ENCODE measurements at regions of chr13 and their contacts with region 1.

Region 1: GRCh38 chr13:113758651-113759524 is at the start of gene TMEM255B:
- DNase-seq: peak; percentile 78
- ATAC-seq: peak; percentile 85
- H3K4me3 Mint-ChIP-seq: peak within 1 kb of the TSS; percentile 82
- H3K27ac Mint-ChIP-seq: peak within 1 kb of the TSS; percentile 80
- H3K4me1 Mint-ChIP-seq: peaks cover 19% of the 10 kb centered on the region
- H3K27me3 Mint-ChIP-seq: peaks cover 28% of the 10 kb centered on the region
- CTCF ChIP-seq: no peak
- total RNA-seq, gene TMEM255B: 5.2 and 6.2 TPM in 2 replicates

Region 2: GRCh38 chr13:113732176-113732960 is 26.5 kb before region 1 on chr13:
- CTCF ChIA-PET with region 1: no interaction called
- POLR2A ChIA-PET with region 1: no interaction called
- intact Hi-C with region 1: loop called (anchors 2 kb)
- DNase-seq: no peak
- ATAC-seq: peak; percentile 87
- H3K4me3 Mint-ChIP-seq: peak overlapping the region; percentile 32
- H3K27ac Mint-ChIP-seq: no peak overlapping the region
- H3K4me1 Mint-ChIP-seq: peaks cover 9% of the 10 kb centered on the region
- H3K27me3 Mint-ChIP-seq: peaks cover 2% of the 10 kb centered on the region
- CTCF ChIP-seq: no peak

Region 3: DNA sequence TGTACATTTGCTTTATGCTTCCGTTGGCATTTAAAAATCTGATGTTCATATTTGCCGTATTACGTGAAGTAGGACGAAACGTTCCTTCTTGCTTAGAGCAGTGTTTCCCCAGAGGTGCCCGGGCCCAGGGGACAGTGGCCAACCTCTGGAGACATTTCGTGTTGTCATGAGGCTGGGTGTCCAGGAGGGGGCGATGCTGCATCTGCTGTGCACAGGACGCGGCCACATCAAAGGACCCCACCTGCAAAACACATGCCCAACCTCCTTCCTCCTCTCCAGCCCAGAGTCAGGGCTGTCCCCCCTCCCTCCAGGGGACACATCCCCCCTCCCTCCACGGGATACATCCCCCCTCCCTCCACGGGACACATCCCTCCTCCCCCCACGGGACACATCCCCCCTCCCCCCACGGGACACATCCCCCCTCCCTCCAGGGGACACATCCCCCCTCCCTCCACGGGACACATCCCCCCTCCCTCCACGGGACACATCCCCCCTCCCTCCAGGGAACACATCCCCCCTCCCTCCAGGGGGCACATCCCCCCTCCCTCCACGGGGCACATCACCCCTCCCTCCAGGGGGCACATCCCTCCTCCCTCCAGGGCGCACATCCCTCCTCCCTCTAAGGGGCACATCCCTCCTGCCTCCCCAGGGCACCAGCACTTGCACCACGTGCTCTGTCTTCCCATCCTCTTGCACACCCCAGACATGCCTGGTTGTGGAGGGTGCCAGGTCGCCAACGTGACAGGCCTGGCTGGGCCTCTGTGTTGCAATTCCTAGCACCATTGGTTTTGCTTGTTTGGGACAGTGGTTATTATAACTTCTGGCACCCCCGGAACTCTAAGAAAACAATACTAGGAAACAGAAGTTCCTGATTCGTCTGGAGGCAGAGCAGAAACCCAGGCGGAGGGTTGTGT is 58.3 kb after region 1 on chr13:
- CTCF ChIA-PET with region 1: no interaction called
- POLR2A ChIA-PET with region 1: no interaction called
- intact Hi-C with region 1: loop called (anchors 2 kb)
- DNase-seq: peak; percentile 69
- ATAC-seq: peak; percentile 87
- H3K4me3 Mint-ChIP-seq: peak overlapping the region; percentile 98
- H3K27ac Mint-ChIP-seq: peak overlapping the region; percentile 70
- H3K4me1 Mint-ChIP-seq: peaks cover 24% of the 10 kb centered on the region
- H3K27me3 Mint-ChIP-seq: no peaks in the 10 kb centered on the region
- CTCF ChIP-seq: no peak

Measured in activated B cell treated with CpG ODN at 0.5 μM for 24 hours (primary cell).